ENCODE measurements at regions of chr9 and their contacts with region 1.

Region 1: DNA sequence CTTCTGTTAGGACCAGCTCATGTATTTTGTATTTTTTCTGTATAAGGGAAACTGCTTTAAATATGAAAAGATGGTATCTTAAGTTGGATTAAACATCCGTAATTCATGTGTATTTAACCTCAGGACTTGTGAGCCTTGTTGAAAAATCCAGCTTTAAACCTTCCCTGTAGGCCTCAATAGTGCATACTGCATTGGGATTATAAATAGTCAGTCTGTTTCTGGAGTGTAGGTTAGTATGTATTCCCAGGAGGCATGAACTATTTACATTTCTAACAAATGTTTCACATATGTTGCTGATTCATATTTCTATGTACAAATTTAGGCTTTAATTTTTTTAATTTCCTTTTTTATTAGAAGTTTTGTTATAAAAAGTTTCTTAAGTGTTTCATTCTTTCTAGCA is 137.9 kb upstream of the GRHPR start:
- DNase-seq: no peak
- CTCF ChIP-seq: no peak

Region 2: DNA sequence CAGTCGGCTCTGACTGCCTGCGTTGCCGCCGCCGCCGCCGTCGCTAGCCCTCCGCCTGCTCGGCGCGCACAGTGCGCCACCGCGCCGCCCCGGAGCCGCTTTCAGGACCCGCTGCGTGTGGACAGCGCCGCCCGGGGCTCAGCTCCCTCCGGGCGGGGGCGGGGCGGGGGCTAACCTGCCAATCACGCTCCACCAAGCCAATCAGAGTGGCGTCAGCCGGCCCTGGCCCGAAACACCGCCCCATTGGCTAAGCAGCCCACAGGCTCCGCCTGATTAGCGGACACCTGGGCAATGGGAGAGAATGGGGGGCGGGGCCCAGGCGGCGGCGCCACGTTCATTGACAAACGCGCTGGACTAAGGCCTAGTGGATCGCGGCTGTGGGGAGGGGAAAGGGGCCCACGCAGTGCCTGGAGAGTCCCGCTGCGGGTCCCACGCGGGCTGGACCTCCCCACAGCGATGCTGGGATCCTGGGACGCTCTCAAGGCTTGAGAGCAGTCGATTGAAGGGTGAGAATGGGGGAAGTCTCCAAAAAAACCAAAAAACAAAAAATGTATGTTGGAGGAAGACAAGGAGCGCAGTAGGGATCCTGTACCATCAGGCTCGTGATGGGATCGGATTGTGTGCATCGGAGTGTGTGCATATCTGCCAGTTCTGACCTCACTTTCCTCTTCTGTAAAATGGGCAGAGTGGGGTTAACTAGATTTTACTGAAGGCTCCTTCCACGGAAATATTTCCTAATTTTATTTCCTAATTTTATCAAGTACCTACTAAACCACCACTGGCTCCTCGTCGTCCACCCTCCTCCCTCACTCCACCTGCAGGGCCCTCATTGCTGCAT is 256.8 kb before region 1 on chr9:
- in situ Hi-C with region 1: loop called (anchors 5 kb)
- DNase-seq: peak; percentile 99
- CTCF ChIP-seq: no peak

Measured in GM13976 (cell line).